AG04449 (cell line): ENCODE measurements at regions of chr15 and their contacts with region 1.

Region 1: DNA sequence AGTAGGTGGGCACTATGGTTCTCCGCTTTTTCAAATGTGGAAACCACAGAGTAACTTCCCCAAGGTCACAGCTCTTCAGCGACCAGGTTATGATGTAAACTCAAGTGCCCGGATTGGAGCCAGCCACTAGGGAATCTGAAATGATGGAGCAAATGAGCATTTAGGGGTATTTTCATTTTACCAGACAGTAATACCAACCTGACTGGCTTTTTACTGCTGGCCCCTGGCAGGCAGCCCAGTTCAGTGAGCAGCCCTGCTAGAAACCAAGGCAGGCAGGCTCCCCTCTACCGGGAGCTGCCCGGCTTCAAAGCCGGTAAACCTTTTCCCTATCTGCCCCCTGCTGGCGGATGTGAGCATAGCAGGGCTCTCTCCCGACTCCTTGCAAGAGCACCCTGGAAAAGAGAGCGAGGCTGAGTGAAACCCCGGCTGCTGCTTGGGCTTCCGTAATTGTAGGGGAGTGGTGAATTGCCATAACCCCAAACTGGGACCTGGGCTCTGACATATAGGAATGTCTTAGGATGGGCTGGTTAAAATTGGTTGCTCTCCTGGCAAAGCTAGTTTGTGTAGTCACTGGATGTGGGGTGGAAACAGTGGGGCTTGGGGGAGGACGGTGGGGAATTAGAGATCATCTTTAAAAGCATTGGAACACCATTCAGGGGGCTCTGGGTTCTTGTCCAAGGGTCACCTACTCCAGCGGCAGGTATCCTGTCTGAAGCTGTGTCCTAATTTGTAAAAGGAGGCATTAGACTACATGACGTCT is 98.0 kb upstream of the TNFAIP8L3 start:
- DNase-seq: no peak
- H3K4me3 ChIP-seq: no peak overlapping the region
- CTCF ChIP-seq: peak; percentile 93

Region 2: GRCh38 chr15:51046799-51047482 is 145.8 kb before region 1 on chr15:
- CTCF ChIA-PET with region 1: no interaction called
- POLR2A ChIA-PET with region 1: no interaction called
- DNase-seq: no peak
- H3K4me3 ChIP-seq: no peak overlapping the region
- CTCF ChIP-seq: no peak

Region 3: DNA sequence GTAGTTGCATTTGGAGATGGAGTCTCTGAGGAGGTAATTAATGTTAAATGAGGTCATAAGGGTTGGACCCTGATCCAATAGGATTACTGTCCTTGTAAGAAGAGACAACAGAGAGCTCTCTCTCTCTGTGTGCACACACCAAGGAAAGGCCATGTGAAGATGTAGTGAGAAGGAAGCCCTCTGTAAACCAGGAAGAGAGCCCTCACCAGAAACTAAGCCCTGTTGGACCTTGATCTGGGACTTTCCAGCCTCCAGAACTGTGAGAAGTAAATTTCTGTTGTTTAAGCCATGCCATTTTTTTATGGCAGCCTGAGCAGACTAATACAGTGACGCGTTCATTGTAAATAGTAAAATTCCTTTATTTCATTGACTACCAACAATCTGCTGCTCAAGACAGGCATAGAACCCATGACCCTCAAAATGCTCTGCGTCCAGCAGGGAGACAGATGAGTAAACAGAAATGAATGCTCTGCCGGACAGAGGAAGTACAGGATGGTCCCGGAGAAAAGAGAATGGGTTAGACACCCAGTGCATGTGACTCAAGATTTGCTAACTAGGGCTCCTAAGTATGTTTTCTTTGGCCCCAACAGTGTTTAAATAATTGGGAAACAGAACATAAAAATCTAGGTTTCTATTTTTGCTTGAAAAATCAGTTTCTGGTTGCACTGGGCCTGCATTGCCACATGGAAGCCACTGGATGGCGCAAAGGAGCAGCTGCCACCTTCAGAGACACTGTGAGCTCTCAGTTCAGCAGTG is 60.1 kb before region 1 on chr15:
- CTCF ChIA-PET with region 1: interaction called, 34 read pairs
- POLR2A ChIA-PET with region 1: no interaction called
- DNase-seq: peak; percentile 95
- H3K4me3 ChIP-seq: no peak overlapping the region
- CTCF ChIP-seq: peak; percentile 94

Region 4: DNA sequence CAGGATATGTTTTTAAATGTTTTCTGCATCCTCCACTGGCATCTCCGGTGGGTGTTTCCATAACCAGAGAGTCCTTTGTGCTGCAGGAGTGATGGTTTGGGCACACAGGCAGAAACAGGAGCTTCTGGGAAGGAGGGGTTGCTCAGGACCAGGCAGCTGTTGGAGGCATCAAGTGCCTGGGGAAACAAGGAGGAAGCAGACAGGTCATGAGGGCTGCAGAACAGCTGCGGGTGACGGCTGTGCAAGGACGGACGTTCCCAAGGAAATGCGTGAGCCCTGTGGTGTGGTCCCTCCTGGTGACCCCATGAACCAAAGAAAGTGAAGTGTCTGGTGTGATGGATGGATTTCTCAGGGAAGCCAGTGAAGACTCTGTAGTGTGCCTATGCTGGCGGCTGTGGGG is 36.8 kb before region 1 on chr15:
- CTCF ChIA-PET with region 1: interaction called, 150 read pairs
- POLR2A ChIA-PET with region 1: no interaction called
- DNase-seq: no peak
- H3K4me3 ChIP-seq: no peak overlapping the region
- CTCF ChIP-seq: no peak

Region 5: GRCh38 chr15:51172193-51172592 is 20.5 kb before region 1 on chr15:
- CTCF ChIA-PET with region 1: interaction called, 30 read pairs
- POLR2A ChIA-PET with region 1: no interaction called
- DNase-seq: no peak
- H3K4me3 ChIP-seq: no peak overlapping the region; the same call in 1 of the 2 replicates
- CTCF ChIP-seq: no peak

Region 6: GRCh38 chr15:51180011-51180410 is 12.7 kb before region 1 on chr15:
- CTCF ChIA-PET with region 1: interaction called, 49 read pairs
- POLR2A ChIA-PET with region 1: no interaction called
- DNase-seq: no peak
- H3K4me3 ChIP-seq: no peak overlapping the region
- CTCF ChIP-seq: no peak

Region 7: GRCh38 chr15:51203797-51204196 is 11.1 kb after region 1 on chr15:
- CTCF ChIA-PET with region 1: interaction called, 53 read pairs
- POLR2A ChIA-PET with region 1: no interaction called
- DNase-seq: peak; percentile 55
- H3K4me3 ChIP-seq: no peak overlapping the region
- CTCF ChIP-seq: no peak

Region 8: GRCh38 chr15:51227940-51228783 is 35.5 kb after region 1 on chr15:
- CTCF ChIA-PET with region 1: interaction called, 32 read pairs
- POLR2A ChIA-PET with region 1: no interaction called
- DNase-seq: peak; percentile 52
- H3K4me3 ChIP-seq: no peak overlapping the region
- CTCF ChIP-seq: no peak